RWPE1 (cell line): ENCODE measurements at regions of chr12 and their contacts with region 1.

Region 1: DNA sequence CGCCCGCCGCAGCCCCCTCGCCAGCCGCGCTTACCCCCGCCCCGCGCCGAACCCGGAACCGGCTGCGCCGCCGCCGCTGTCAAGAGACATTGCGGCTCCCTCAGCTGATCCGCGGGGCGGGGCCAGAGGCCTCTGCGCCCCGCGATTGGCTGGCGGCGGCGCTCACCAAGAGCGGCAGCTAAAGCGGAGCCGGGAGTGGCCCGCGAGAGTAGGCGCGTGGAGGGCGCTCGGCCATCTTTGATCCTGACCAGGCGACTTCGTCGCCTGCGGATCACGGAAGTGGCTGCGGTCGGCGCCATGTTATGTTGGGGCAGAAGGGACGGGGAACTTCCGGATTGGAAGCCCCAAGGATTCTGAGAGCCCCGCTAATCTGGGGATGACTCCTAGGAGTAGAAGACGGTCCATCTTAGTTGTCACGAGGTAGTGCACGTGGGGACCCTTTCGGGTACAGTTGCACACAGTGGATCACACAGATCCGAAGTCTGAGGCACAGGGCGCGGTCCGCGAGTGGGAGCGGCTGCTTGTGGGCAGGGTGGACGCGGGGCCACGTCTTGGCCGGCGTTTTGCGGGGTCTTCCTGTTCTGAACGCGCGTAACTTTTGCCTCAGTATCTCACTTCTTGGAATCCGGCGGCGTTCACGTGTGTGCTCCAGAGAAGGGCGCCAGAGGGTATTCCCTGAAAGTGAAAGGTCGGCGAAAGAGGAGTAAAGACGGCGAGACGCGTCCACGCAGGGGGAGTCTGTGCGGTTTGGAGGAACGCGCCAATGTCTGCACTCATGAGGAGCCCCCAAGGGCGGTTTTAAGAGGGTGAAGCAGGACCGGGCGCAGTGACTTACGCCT is at the start of gene CHFR:
- DNase-seq: peak; percentile 93
- H3K27ac ChIP-seq: peak within 1 kb of the TSS; percentile 94
- CTCF ChIP-seq: no peak

Region 2: DNA sequence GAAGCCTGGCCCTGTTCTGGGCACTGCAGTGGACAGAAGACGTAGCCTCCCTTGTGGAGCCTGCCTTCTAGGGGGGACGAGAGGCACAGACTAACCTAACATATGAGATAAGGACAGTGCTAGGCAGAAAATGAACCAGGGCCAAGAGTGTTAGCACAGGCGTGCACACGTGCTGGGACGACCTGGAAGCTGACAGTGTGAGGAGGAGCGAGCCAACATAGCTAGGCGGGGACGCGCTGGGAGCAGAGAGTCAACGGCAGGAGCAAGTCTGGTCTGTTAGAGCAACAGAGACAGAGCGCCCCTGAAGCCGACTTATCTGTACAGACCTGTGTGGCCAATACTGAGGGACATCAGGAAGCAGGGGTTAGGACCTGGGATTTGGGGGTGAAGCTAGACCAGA is 192.3 kb before region 1 on chr12:
- CTCF ChIA-PET with region 1: no interaction called
- POLR2A ChIA-PET with region 1: no interaction called
- DNase-seq: no peak
- H3K27ac ChIP-seq: 0 out of 2 replicates have a peak overlapping the region, but pooled peaks have one; percentile 7
- CTCF ChIP-seq: no peak

Region 3: GRCh38 chr12:132866251-132866828 is 21.4 kb before region 1 on chr12:
- CTCF ChIA-PET with region 1: no interaction called
- POLR2A ChIA-PET with region 1: interaction called, 11 read pairs
- DNase-seq: peak; percentile 15
- H3K27ac ChIP-seq: peak overlapping the region; percentile 69
- CTCF ChIP-seq: no peak

Region 4: GRCh38 chr12:132921685-132922084 is 34.0 kb after region 1 on chr12:
- CTCF ChIA-PET with region 1: no interaction called
- POLR2A ChIA-PET with region 1: no interaction called
- DNase-seq: no peak
- H3K27ac ChIP-seq: no peak overlapping the region
- CTCF ChIP-seq: no peak